Calu3 (cell line): ENCODE measurements at regions of chr6 and their contacts with region 1.

Region 1: GRCh38 chr6:157981395-157982296 is at the start of gene SYNJ2:
- DNase-seq: peak; percentile 87
- H3K4me3 Mint-ChIP-seq: peak within 1 kb of the TSS; percentile 79
- H3K27ac Mint-ChIP-seq: peak within 1 kb of the TSS; percentile 63
- H3K4me1 Mint-ChIP-seq: peaks cover 30% of the 10 kb centered on the region
- H3K27me3 Mint-ChIP-seq: peaks cover 19% of the 10 kb centered on the region
- CTCF ChIP-seq: peak; percentile 37
- total RNA-seq, gene SYNJ2: 26.8 and 29.1 TPM in 2 replicates

Region 2: GRCh38 chr6:158026054-158026900 is 44.6 kb after region 1 on chr6:
- CTCF ChIA-PET with region 1: interaction called, 10 read pairs
- intact Hi-C with region 1: no loop called
- DNase-seq: peak; percentile 93
- H3K4me3 Mint-ChIP-seq: peak overlapping the region; percentile 54
- H3K27ac Mint-ChIP-seq: peak overlapping the region; percentile 97
- H3K4me1 Mint-ChIP-seq: peaks cover 30% of the 10 kb centered on the region
- H3K27me3 Mint-ChIP-seq: no peaks in the 10 kb centered on the region
- CTCF ChIP-seq: peak; percentile 88

Region 3: GRCh38 chr6:158033751-158034702 is 52.4 kb after region 1 on chr6:
- CTCF ChIA-PET with region 1: interaction called, 5 read pairs
- intact Hi-C with region 1: loop called (anchors 2 kb)
- DNase-seq: peak; percentile 76
- H3K4me3 Mint-ChIP-seq: peak overlapping the region; percentile 29
- H3K27ac Mint-ChIP-seq: peak overlapping the region; percentile 50
- H3K4me1 Mint-ChIP-seq: peaks cover 57% of the 10 kb centered on the region
- H3K27me3 Mint-ChIP-seq: no peaks in the 10 kb centered on the region
- CTCF ChIP-seq: no peak

Region 4: DNA sequence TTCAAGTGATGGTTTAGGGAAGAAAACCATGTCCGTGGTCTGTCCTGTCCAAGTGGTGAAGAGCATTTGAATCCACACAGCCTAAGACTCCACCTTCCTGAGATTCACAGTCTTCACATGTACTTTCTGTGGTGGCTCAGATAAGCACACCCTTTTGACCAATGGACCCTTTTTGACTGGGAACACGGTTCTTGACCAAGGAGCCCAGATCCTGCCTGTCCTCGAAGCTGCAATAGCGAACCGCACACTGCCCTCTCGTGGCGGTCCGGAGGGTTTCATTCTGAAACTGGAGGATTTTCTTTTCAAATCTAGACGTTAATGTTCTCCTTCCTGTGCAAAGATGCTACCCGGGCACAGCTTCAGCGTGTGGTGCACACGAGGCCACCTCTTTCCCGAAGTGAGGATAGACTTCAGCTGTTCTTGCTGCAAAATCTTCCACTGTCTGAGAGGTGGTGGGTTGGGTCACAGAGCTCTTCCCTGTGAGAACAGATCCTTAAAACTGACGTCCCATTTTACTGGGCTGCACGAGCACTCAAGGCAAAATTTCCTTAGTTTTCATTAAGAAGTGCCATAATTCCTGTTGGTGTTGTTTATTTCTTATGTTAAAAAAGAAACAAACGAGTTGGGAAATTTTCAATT is 90.6 kb after region 1 on chr6:
- CTCF ChIA-PET with region 1: interaction called, 11 read pairs
- intact Hi-C with region 1: loop called (anchors 2 kb)
- DNase-seq: peak; percentile 74
- H3K4me3 Mint-ChIP-seq: no peak overlapping the region
- H3K27ac Mint-ChIP-seq: no peak overlapping the region
- H3K4me1 Mint-ChIP-seq: peaks cover 37% of the 10 kb centered on the region
- H3K27me3 Mint-ChIP-seq: no peaks in the 10 kb centered on the region
- CTCF ChIP-seq: peak; percentile 81

Region 5: GRCh38 chr6:158879180-158879579 is 897.5 kb after region 1 on chr6:
- CTCF ChIA-PET with region 1: no interaction called
- intact Hi-C with region 1: no loop called
- DNase-seq: no peak
- H3K4me3 Mint-ChIP-seq: no peak overlapping the region
- H3K27ac Mint-ChIP-seq: no peak overlapping the region
- H3K4me1 Mint-ChIP-seq: peaks cover 9% of the 10 kb centered on the region
- H3K27me3 Mint-ChIP-seq: no peaks in the 10 kb centered on the region
- CTCF ChIP-seq: no peak